ENCODE measurements at regions of chr19 and their contacts with region 1.

Region 1: DNA sequence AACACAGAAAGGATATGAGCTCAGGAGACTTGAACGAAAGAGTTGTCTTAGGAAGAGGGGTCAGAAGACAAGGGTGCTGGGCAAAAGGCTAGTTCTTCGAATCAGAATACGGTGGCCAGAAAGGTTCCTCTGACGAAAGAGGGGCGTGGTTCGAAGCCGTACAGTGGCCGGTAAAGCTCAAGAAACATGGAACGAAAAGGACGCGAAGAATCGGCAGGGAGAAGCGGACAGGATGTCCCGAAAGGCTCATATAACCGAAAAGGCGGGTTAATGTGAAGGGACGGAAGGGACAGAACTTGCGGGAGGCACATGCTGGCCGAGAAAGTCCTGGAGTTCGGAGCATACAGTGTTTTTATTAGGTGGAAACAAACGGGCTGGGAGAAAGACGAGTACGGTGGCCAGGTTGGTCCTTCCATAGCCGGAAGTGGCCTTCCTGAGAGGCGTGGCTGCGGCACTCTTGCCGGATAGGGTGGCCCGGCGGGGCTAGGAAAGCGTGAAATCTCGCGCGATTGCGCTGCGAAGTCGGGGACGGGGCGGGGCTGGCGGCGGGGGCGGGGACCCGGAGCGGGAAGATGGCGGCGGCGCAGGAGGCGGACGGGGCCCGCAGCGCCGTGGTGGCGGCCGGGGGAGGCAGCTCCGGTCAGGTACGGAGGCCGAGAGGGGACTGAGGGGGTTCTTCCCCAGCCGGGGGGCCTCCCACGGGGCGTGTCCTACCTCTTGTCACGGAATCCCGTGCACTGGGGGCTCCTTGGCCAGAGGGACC is at the start of gene CLPTM1:
- DNase-seq: peak in 1 of 2 donors; percentile 96
- H3K4me3 ChIP-seq: peak within 1 kb of the TSS; percentile 92 to 93
- H3K27ac ChIP-seq: peak within 1 kb of the TSS; percentile 83
- H3K4me1 ChIP-seq: peaks cover 65% of the 10 kb centered on the region
- H3K27me3 ChIP-seq: no peaks in the 10 kb centered on the region
- CTCF ChIP-seq: peak in 1 of 3 experiments; percentile 33
- POLR2A ChIP-seq: peak in 1 of 2 donors; percentile 59
- total RNA-seq, gene CLPTM1: 130 TPM

Region 2: DNA sequence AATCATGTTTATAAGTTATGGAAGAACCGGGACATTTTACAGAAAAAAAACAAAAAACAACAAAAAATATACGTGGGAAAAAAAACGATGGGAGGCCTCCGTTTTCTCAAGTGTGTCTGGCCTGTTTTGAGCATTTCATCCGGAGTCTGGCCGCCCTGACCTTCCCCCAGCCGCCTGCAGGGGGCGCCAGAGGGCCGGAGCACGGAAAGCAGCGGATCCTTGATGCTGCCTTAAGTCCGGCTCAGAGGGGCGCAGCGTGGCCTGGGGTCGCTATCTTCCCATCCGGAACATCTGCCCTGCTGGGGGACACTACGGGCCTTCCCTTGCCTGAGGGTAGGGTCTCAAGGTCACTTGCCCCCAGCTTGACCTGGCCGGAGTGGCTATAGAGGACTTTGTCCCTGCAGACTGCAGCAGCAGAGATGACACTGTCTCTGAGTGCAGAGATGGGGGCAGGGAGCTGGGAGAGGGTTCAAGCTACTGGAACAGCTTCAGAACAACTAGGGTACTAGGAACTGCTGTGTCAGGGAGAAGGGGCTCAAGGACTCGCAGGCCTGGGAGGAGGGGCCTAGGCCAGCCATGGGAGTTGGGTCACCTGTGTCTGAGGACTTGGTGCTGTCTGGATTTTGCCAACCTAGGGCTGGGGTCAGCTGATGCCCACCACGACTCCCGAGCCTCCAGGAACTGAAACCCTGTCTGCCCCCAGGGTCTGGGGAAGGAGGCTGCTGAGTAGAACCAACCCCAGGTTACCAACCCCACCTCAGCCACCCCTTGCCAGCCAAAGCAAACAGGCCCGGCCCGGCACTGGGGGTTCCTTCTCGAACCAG is 51.2 kb before region 1 on chr19:
- intact Hi-C with region 1: loop called (anchors 5 kb)
- DNase-seq: no peak
- H3K4me3 ChIP-seq: no peak overlapping the region
- H3K27ac ChIP-seq: no peak overlapping the region
- H3K4me1 ChIP-seq: peaks cover 23% of the 10 kb centered on the region
- H3K27me3 ChIP-seq: no peaks in the 10 kb centered on the region
- CTCF ChIP-seq: peak; percentile 96 to 98 (median 97)
- POLR2A ChIP-seq: no peak